ENCODE measurements at regions of chr16 and their contacts with region 1.

Region 1: DNA sequence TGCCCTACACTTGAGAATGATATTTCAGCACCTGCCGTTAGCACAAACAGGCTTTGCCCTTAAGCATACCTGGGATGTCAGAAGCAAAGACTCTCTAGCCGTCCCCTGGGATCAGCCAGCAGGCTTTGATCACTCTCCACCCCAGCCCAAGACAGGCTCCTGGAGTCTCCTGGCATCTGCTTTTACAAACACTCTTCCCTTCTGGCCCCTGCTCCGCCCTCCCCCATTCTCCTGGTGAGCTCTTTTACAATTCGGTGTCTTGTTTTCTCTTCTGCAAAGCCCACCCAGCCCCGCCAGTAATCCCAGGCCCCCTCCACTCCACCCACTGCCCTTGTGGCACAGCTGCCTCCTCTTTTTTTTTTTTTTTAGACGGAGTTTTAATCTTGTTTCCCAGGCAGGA is 50.4 kb downstream of the KATNIP start:
- DNase-seq: no peak
- ATAC-seq: no peak
- H3K4me3 ChIP-seq: no peak overlapping the region
- H3K27ac ChIP-seq: no peak overlapping the region
- H3K4me1 ChIP-seq: peaks cover 7% of the 10 kb centered on the region
- H3K27me3 ChIP-seq: no peaks in the 10 kb centered on the region
- CTCF ChIP-seq: no peak
- EP300 ChIP-seq: no peak
- POLR2A ChIP-seq: no peak
- RAD21 ChIP-seq: no peak

Region 2: GRCh38 chr16:27515874-27516353 is 84.5 kb before region 1 on chr16:
- CTCF ChIA-PET with region 1: no interaction called
- POLR2A ChIA-PET with region 1: no interaction called
- in situ Hi-C with region 1: no loop called
- intact Hi-C with region 1: loop called (anchors 10 kb)
- DNase-seq: peak; percentile 36
- ATAC-seq: peak; percentile 90
- H3K4me3 ChIP-seq: no peak overlapping the region
- H3K27ac ChIP-seq: no peak overlapping the region
- H3K4me1 ChIP-seq: peaks cover 13% of the 10 kb centered on the region
- H3K27me3 ChIP-seq: no peaks in the 10 kb centered on the region
- CTCF ChIP-seq: peak; percentile 49
- EP300 ChIP-seq: no peak
- POLR2A ChIP-seq: no peak
- RAD21 ChIP-seq: peak; percentile 25; the same call in 1 of the 2 replicates

Region 3: DNA sequence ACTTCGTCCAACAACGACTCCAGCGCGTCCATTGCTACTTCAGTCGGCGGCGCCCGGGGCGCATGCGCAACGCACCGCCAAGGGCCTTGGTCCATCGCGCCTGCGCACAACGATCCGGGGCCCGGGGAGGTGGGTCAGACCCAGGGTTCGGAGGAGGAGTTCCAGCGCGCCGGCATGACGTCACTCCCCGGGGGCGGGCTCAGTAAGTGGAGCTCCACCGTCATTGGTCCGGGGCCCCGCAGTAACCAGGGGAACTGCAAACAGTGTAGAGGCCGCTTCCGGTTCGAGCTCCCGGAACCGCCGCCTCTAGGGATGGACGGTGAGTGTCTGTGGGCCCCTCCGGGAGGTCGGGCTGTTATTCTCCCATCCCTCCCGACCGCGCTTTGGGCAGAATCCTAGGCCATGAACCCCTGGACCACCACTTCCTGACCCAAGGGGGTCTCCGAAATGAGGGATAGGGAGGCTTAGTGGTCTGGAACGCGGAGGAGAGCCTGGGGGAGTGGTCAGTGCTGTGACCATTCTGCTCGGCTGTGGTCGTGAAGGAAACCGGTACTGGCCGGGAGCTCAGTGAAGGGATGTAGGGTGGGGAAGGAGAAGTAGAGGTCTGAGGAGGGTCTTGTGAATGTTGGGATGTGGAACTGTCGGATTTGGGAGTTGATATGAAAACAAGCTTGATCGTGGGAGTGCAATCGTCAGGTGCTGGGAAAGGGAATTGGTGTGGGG is 50.4 kb before region 1 on chr16 and contains the starts of genes GTF3C1 and KATNIP:
- CTCF ChIA-PET with region 1: no interaction called
- POLR2A ChIA-PET with region 1: interaction called, 11 read pairs
- in situ Hi-C with region 1: no loop called
- intact Hi-C with region 1: no loop called
- DNase-seq: peak; percentile 98
- ATAC-seq: peak; percentile 99
- H3K4me3 ChIP-seq: peak within 1 kb of the TSS; percentile 85 to 98 (median 94)
- H3K27ac ChIP-seq: peak within 1 kb of the TSS; percentile 64
- H3K4me1 ChIP-seq: peaks cover 34% of the 10 kb centered on the region
- H3K27me3 ChIP-seq: no peaks in the 10 kb centered on the region; a peak in 1 of 5 replicates
- CTCF ChIP-seq: no peak
- EP300 ChIP-seq: no peak
- POLR2A ChIP-seq: peak; percentile 90 to 93
- RAD21 ChIP-seq: no peak
- total RNA-seq, gene GTF3C1: 44.9 and 72.7 TPM in 2 replicates
- total RNA-seq, gene KATNIP: 11.8 and 12.0 TPM in 2 replicates

Region 4: GRCh38 chr16:27579087-27579980 is 21.0 kb before region 1 on chr16:
- CTCF ChIA-PET with region 1: no interaction called
- POLR2A ChIA-PET with region 1: interaction called, 4 read pairs
- in situ Hi-C with region 1: no loop called
- intact Hi-C with region 1: loop called (anchors 2 kb)
- DNase-seq: peak; percentile 89
- ATAC-seq: peak; percentile 97
- H3K4me3 ChIP-seq: peak overlapping the region in 1 of 3 experiments; percentile 23; a peak in 1 of 6 replicates
- H3K27ac ChIP-seq: peak overlapping the region; percentile 71
- H3K4me1 ChIP-seq: peaks cover 27% of the 10 kb centered on the region
- H3K27me3 ChIP-seq: no peaks in the 10 kb centered on the region
- CTCF ChIP-seq: no peak; the same call in 1 of the 2 replicates
- EP300 ChIP-seq: peak in 1 of 2 experiments; percentile 54; a peak in 2 of 4 replicates
- POLR2A ChIP-seq: peak; percentile 24 to 63; a peak in 2 of 4 replicates
- RAD21 ChIP-seq: no peak

Region 5: GRCh38 chr16:27650073-27650701 is 49.8 kb after region 1 on chr16:
- CTCF ChIA-PET with region 1: no interaction called
- POLR2A ChIA-PET with region 1: no interaction called
- in situ Hi-C with region 1: no loop called
- intact Hi-C with region 1: no loop called
- DNase-seq: no peak
- ATAC-seq: no peak
- H3K4me3 ChIP-seq: no peak overlapping the region
- H3K27ac ChIP-seq: no peak overlapping the region
- H3K4me1 ChIP-seq: no peaks in the 10 kb centered on the region
- H3K27me3 ChIP-seq: no peaks in the 10 kb centered on the region
- CTCF ChIP-seq: no peak
- EP300 ChIP-seq: no peak
- POLR2A ChIP-seq: no peak
- RAD21 ChIP-seq: no peak